ENCODE measurements at regions of chr2 and their contacts with region 1.

Region 1: GRCh38 chr2:190679813-190680591 is 31.1 kb downstream of the NAB1 start:
- DNase-seq: peak; percentile 72
- ATAC-seq: peak; percentile 86
- H3K4me3 ChIP-seq: peak overlapping the region in 1 of 5 experiments; percentile 1
- H3K4me3 Mint-ChIP-seq: peak overlapping the region; percentile 62
- H3K27ac ChIP-seq: peak overlapping the region; percentile 27 to 37
- H3K27ac Mint-ChIP-seq: peak overlapping the region; percentile 88
- H3K4me1 ChIP-seq: peaks cover 14 to 21% of the 10 kb centered on the region in 2 donors
- H3K4me1 Mint-ChIP-seq: peaks cover 38% of the 10 kb centered on the region
- H3K27me3 ChIP-seq: no peaks in the 10 kb centered on the region
- H3K27me3 Mint-ChIP-seq: no peaks in the 10 kb centered on the region
- CTCF ChIP-seq: peak; percentile 78

Region 2: DNA sequence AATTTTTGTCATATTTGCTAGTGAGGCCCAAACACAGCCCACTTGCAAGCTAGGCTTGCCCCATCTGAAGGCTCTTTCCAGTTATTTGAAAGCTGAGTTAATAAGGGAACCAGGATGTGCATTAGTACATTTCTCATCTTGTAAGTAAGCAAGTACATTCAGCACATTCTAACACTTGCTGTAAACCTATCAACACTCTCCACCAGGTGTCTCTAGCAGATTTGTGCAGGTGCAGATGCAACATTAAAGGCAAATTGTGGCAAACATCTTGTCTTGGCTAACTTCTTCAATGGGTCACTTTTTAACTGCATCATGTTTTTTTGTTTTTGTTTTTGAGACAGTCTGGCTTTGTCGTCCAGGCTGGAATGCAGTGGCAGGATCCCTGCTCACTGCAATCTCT is 297.2 kb before region 1 on chr2:
- CTCF ChIA-PET with region 1: interaction called, 29 read pairs
- POLR2A ChIA-PET with region 1: no interaction called
- intact Hi-C with region 1: loop called (anchors 1 kb)
- DNase-seq: peak; percentile 66
- ATAC-seq: peak; percentile 66
- H3K4me3 ChIP-seq: no peak overlapping the region
- H3K4me3 Mint-ChIP-seq: no peak overlapping the region
- H3K27ac ChIP-seq: no peak overlapping the region
- H3K27ac Mint-ChIP-seq: no peak overlapping the region
- H3K4me1 ChIP-seq: no peaks in the 10 kb centered on the region
- H3K4me1 Mint-ChIP-seq: peaks cover 2% of the 10 kb centered on the region
- H3K27me3 ChIP-seq: no peaks in the 10 kb centered on the region
- H3K27me3 Mint-ChIP-seq: no peaks in the 10 kb centered on the region
- CTCF ChIP-seq: peak; percentile 66

Region 3: GRCh38 chr2:190432567-190433231 is 247.3 kb before region 1 on chr2:
- CTCF ChIA-PET with region 1: no interaction called
- POLR2A ChIA-PET with region 1: no interaction called
- intact Hi-C with region 1: no loop called
- DNase-seq: no peak
- ATAC-seq: no peak
- H3K4me3 ChIP-seq: no peak overlapping the region
- H3K4me3 Mint-ChIP-seq: no peak overlapping the region
- H3K27ac ChIP-seq: no peak overlapping the region
- H3K27ac Mint-ChIP-seq: no peak overlapping the region
- H3K4me1 ChIP-seq: peaks cover 6 to 8% of the 10 kb centered on the region in 2 donors
- H3K4me1 Mint-ChIP-seq: peaks cover 33% of the 10 kb centered on the region
- H3K27me3 ChIP-seq: no peaks in the 10 kb centered on the region
- H3K27me3 Mint-ChIP-seq: no peaks in the 10 kb centered on the region
- CTCF ChIP-seq: no peak

Region 4: GRCh38 chr2:190666895-190667294 is 13.1 kb before region 1 on chr2:
- CTCF ChIA-PET with region 1: interaction called, 10 read pairs
- POLR2A ChIA-PET with region 1: no interaction called
- intact Hi-C with region 1: no loop called
- DNase-seq: no peak
- ATAC-seq: no peak
- H3K4me3 ChIP-seq: no peak overlapping the region
- H3K4me3 Mint-ChIP-seq: no peak overlapping the region
- H3K27ac ChIP-seq: no peak overlapping the region
- H3K27ac Mint-ChIP-seq: no peak overlapping the region
- H3K4me1 ChIP-seq: no peaks in the 10 kb centered on the region
- H3K4me1 Mint-ChIP-seq: peaks cover 4% of the 10 kb centered on the region
- H3K27me3 ChIP-seq: no peaks in the 10 kb centered on the region
- H3K27me3 Mint-ChIP-seq: no peaks in the 10 kb centered on the region
- CTCF ChIP-seq: no peak